ENCODE measurements at regions of chr15 and their contacts with region 1.

Region 1: DNA sequence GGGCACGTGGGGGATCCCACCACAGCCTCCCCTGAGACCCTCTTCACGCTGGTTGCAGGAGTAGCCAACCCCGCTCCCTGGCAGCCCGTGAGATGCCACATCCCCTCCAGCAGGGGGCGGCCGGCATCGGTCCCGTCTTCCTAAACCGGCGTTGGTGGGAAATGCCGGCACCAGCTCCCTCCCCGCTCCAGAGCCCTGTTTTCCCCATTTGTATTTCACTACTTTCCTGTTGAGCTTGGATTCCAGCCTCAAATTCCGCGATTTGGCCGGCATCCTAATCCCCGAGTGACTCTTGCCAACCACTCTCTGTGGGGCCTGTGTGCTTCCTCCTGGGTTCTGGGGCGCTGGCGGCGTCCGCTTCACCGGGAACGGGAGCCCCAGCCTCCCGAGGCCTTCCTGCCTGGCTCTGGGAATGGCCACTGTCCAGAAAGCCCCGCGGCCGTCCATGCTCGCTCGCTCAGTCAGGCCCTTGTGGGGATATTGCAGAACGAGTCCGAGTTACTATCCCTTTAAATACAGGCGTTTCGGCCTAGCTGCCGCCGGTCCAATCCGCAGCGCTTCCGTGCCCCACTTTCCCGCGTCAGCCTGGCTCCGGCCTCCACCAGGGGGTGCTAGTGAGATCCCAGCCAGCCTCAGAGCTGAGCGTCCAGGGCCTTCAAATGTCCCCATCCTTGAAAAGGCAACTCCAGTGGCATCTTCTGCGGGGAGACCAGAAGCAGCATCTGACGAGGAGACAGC is 8.1 kb upstream of the ADAMTS17 start:
- DNase-seq: peak; percentile 92
- H3K4me3 ChIP-seq: peak overlapping the region; percentile 57 to 58; a peak in 3 of 4 replicates
- H3K27ac ChIP-seq: peak overlapping the region in 1 of 2 experiments; percentile 79; a peak in 2 of 4 replicates
- H3K4me1 ChIP-seq: peaks cover 0 to 3% of the 10 kb centered on the region in 2 experiments; a peak in 1 of 4 replicates
- H3K27me3 ChIP-seq: no peaks in the 10 kb centered on the region
- CTCF ChIP-seq: peak; percentile 46
- EP300 ChIP-seq: no peak
- RAD21 ChIP-seq: peak; percentile 66

Region 2: GRCh38 chr15:99928429-99928981 is 421.4 kb before region 1 on chr15:
- CTCF ChIA-PET with region 1: interaction called, 22 read pairs
- POLR2A ChIA-PET with region 1: no interaction called
- DNase-seq: peak; percentile 82
- H3K4me3 ChIP-seq: peak overlapping the region; percentile 45 to 52; a peak in 3 of 4 replicates
- H3K27ac ChIP-seq: no peak overlapping the region
- H3K4me1 ChIP-seq: peaks cover 0 to 4% of the 10 kb centered on the region in 2 experiments; a peak in 1 of 4 replicates
- H3K27me3 ChIP-seq: no peaks in the 10 kb centered on the region; the same call in 1 of the 2 replicates
- CTCF ChIP-seq: peak; percentile 49
- EP300 ChIP-seq: no peak
- RAD21 ChIP-seq: peak; percentile 75

Region 3: DNA sequence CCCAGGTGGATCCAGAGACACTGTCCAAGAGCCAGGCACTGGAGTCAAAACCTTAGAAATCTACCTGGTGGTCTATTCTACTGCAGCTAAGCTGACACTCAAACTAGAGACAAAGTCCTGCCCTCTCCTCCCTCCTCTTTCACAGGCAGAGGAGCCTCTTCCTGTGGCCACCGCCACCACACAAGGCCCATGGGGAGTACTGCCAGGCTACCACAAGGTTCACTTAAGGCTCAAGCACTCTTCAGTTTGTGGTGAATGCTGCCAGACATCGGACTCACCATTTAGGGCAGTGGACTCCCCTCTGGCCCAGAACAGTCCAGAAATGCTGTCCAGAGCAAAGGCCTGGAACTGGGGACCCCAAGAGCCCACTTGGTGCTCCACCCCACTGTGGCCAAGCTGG is 168.9 kb before region 1 on chr15:
- CTCF ChIA-PET with region 1: no interaction called
- POLR2A ChIA-PET with region 1: no interaction called
- DNase-seq: no peak
- H3K4me3 ChIP-seq: no peak overlapping the region
- H3K27ac ChIP-seq: no peak overlapping the region
- H3K4me1 ChIP-seq: no peaks in the 10 kb centered on the region
- H3K27me3 ChIP-seq: no peaks in the 10 kb centered on the region
- CTCF ChIP-seq: no peak
- EP300 ChIP-seq: no peak
- RAD21 ChIP-seq: no peak

Region 4: DNA sequence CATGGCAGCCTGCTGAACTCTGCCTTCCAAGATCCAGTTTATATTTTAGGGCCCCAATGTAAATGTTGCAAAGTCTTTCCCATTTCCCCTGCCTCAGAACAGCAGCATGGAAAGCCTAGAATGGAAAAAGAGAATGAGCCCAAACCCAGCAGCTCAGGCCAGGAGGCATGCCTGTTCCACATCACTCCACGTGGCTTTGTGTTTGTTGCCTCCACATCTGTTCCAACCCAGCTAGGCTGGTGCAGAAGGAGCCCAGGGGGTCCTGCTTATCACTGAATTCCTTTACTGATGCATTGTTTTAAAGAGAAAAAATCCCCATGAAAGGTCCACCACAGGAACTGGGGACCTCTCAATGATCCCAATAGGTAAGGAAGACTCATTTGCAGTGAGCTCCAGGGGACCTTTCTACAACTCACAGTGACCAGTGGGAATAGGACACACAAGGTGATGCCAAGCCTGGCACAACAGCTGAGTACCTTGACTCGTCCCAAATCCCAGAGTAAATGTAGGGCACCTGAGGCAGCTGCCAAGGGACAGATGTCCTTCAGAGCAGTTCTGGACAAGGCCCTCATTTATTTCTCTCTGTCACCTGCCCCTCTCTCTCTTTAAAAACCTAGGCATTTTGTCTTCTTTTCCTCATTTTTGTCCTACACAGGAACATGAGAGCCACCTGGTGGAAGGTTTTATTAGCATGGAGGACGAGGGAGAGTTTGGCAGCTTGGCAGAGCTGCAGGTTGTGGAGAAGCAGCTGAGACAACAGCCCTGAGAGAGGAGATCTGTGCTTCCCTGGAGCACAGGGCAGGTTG is 33.6 kb after region 1 on chr15:
- CTCF ChIA-PET with region 1: interaction called, 184 read pairs
- POLR2A ChIA-PET with region 1: no interaction called
- DNase-seq: peak; percentile 45
- H3K4me3 ChIP-seq: no peak overlapping the region
- H3K27ac ChIP-seq: no peak overlapping the region
- H3K4me1 ChIP-seq: no peaks in the 10 kb centered on the region
- H3K27me3 ChIP-seq: no peaks in the 10 kb centered on the region
- CTCF ChIP-seq: no peak
- EP300 ChIP-seq: no peak
- RAD21 ChIP-seq: peak; percentile 69

Region 5: DNA sequence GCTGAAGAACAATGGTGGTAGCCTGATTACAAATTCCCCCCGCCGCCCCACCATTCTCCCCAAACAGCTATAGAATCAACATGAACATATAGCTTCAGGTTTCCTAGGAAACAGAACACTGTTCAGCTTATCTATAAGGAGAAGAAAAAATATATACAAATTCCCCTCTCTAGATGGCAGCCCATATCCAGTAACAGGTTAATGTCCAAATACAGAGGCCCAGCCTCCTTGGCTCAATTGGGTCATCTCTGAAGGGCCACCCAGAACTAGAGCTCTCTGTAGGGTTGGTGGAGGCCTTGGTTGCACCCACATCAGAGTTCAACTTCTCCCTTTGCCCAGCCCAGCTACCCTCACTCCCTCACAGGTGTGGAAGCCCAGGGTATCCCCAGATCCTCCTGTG is 83.4 kb after region 1 on chr15:
- CTCF ChIA-PET with region 1: interaction called, 12 read pairs
- POLR2A ChIA-PET with region 1: no interaction called
- DNase-seq: no peak
- H3K4me3 ChIP-seq: no peak overlapping the region
- H3K27ac ChIP-seq: no peak overlapping the region
- H3K4me1 ChIP-seq: no peaks in the 10 kb centered on the region
- H3K27me3 ChIP-seq: no peaks in the 10 kb centered on the region
- CTCF ChIP-seq: no peak
- EP300 ChIP-seq: no peak
- RAD21 ChIP-seq: peak; percentile 8; the same call in 1 of the 2 replicates

Region 6: GRCh38 chr15:100565591-100565990 is 215.7 kb after region 1 on chr15:
- CTCF ChIA-PET with region 1: interaction called, 130 read pairs
- POLR2A ChIA-PET with region 1: no interaction called
- DNase-seq: no peak
- H3K4me3 ChIP-seq: no peak overlapping the region
- H3K27ac ChIP-seq: no peak overlapping the region
- H3K4me1 ChIP-seq: no peaks in the 10 kb centered on the region
- H3K27me3 ChIP-seq: no peaks in the 10 kb centered on the region
- CTCF ChIP-seq: no peak
- EP300 ChIP-seq: no peak
- RAD21 ChIP-seq: no peak

Region 7: GRCh38 chr15:100596792-100597191 is 246.9 kb after region 1 on chr15:
- CTCF ChIA-PET with region 1: interaction called, 18 read pairs
- POLR2A ChIA-PET with region 1: no interaction called
- DNase-seq: no peak
- H3K4me3 ChIP-seq: no peak overlapping the region
- H3K27ac ChIP-seq: no peak overlapping the region; a peak in 1 of 4 replicates
- H3K4me1 ChIP-seq: peaks cover 0 to 19% of the 10 kb centered on the region in 2 experiments; a peak in 2 of 4 replicates
- H3K27me3 ChIP-seq: no peaks in the 10 kb centered on the region
- CTCF ChIP-seq: no peak
- EP300 ChIP-seq: no peak
- RAD21 ChIP-seq: no peak

Region 8: GRCh38 chr15:101000271-101000681 is 650.4 kb after region 1 on chr15:
- CTCF ChIA-PET with region 1: interaction called, 11 read pairs
- POLR2A ChIA-PET with region 1: no interaction called
- DNase-seq: no peak
- H3K4me3 ChIP-seq: no peak overlapping the region
- H3K27ac ChIP-seq: peak overlapping the region in 1 of 2 experiments; percentile 73; a peak in 2 of 4 replicates
- H3K4me1 ChIP-seq: peaks cover 3 to 16% of the 10 kb centered on the region in 2 experiments
- H3K27me3 ChIP-seq: no peaks in the 10 kb centered on the region
- CTCF ChIP-seq: no peak
- EP300 ChIP-seq: no peak
- RAD21 ChIP-seq: no peak

Measured in SK-N-SH (cell line).